ENCODE measurements at regions of chr20 and their contacts with region 1.

Region 1: DNA sequence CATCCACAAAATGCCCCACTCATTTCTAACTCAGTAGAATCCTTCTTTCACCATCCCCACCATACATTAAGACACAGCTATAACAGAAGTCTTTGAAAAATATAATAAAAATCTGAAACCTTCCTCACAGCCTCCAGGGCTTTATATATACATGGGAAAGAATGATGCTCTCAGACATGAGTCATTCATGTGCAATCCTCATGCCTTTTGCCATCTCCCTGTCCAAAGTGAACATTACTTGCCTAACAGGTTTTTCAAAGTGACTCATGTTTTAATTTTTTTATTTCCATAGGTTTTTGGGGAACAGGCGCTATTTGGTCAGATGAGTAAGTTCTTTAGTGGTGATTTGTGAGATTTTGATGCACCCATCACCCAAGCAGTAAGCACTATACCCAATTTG is 162.7 kb downstream of the RALGAPA2 start:
- DNase-seq: no peak
- ATAC-seq: no peak
- H3K4me3 Mint-ChIP-seq: no peak overlapping the region
- H3K27ac Mint-ChIP-seq: no peak overlapping the region
- H3K4me1 Mint-ChIP-seq: peaks cover 30% of the 10 kb centered on the region
- H3K27me3 Mint-ChIP-seq: no peaks in the 10 kb centered on the region
- CTCF ChIP-seq: no peak

Region 2: DNA sequence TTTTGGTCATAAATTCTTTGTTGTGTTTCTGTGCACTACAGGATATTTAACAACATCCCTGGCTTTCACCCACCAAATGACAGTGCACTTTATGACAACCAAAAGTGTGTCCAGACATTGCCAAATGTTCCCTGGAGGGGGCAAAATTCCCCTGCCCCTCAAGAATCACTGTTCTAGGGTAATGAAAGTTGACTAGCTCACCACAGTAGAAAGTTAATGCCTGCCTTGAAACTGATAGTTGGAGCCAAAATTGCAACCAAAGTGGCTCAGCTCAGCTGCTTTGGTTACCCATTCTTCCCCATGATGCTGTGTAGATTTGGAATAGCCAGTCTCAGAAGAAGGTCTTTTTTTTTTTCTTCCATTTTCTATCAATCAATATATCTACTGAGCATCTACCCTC is 12.1 kb after region 1 on chr20:
- CTCF ChIA-PET with region 1: interaction called, 11 read pairs
- POLR2A ChIA-PET with region 1: interaction called, 6 read pairs
- intact Hi-C with region 1: no loop called
- DNase-seq: no peak
- ATAC-seq: no peak
- H3K4me3 Mint-ChIP-seq: no peak overlapping the region
- H3K27ac Mint-ChIP-seq: no peak overlapping the region
- H3K4me1 Mint-ChIP-seq: no peaks in the 10 kb centered on the region
- H3K27me3 Mint-ChIP-seq: no peaks in the 10 kb centered on the region
- CTCF ChIP-seq: no peak